Activated CD8-positive, alpha-beta T cell treated with anti-CD3 and anti-CD28 coated beads for 36 hours (primary cell): ENCODE measurements at regions of chr19 and their contacts with region 1.

Region 1: GRCh38 chr19:19170053-19170872 is at the start of gene MEF2B:
- DNase-seq: peak; percentile 87
- ATAC-seq: peak; percentile 93
- H3K4me3 Mint-ChIP-seq: no peak within 1 kb of the TSS
- H3K27ac Mint-ChIP-seq: no peak within 1 kb of the TSS
- H3K4me1 Mint-ChIP-seq: peaks cover 12% of the 10 kb centered on the region
- H3K27me3 Mint-ChIP-seq: peaks cover 4% of the 10 kb centered on the region
- CTCF ChIP-seq: no peak
- total RNA-seq, gene MEF2B: 1.4 to 2.6 TPM

Region 2: DNA sequence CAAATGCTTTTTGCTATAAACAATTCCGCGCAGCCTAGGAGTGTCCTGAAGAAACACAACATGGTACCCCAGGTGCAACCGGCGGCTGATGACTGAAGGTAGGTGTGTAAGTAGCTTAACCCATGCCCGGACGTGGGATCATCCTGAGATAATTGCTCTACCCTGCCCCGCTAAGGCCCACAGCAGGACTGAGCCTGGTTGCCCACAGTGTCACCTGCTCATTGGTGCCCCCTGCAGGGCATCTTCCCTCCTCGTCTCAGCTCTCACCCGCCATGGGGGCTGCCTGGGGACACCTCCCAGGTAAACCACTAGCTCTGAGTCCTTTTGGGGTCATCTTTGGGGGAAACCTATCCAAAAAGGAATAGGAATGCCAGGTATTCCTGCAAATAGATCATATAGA is 54.3 kb before region 1 on chr19:
- CTCF ChIA-PET with region 1: no interaction called
- POLR2A ChIA-PET with region 1: no interaction called
- intact Hi-C with region 1: no loop called
- DNase-seq: peak; percentile 69
- ATAC-seq: peak; percentile 64
- H3K4me3 Mint-ChIP-seq: no peak overlapping the region
- H3K27ac Mint-ChIP-seq: no peak overlapping the region
- H3K4me1 Mint-ChIP-seq: peaks cover 2% of the 10 kb centered on the region
- H3K27me3 Mint-ChIP-seq: no peaks in the 10 kb centered on the region
- CTCF ChIP-seq: peak; percentile 67

Region 3: GRCh38 chr19:19139876-19140229 is 30.4 kb before region 1 on chr19:
- CTCF ChIA-PET with region 1: interaction called, 14 read pairs
- POLR2A ChIA-PET with region 1: interaction called, 3 read pairs
- intact Hi-C with region 1: no loop called
- DNase-seq: no peak
- ATAC-seq: no peak
- H3K4me3 Mint-ChIP-seq: no peak overlapping the region
- H3K27ac Mint-ChIP-seq: no peak overlapping the region
- H3K4me1 Mint-ChIP-seq: peaks cover 28% of the 10 kb centered on the region
- H3K27me3 Mint-ChIP-seq: no peaks in the 10 kb centered on the region
- CTCF ChIP-seq: no peak

Region 4: DNA sequence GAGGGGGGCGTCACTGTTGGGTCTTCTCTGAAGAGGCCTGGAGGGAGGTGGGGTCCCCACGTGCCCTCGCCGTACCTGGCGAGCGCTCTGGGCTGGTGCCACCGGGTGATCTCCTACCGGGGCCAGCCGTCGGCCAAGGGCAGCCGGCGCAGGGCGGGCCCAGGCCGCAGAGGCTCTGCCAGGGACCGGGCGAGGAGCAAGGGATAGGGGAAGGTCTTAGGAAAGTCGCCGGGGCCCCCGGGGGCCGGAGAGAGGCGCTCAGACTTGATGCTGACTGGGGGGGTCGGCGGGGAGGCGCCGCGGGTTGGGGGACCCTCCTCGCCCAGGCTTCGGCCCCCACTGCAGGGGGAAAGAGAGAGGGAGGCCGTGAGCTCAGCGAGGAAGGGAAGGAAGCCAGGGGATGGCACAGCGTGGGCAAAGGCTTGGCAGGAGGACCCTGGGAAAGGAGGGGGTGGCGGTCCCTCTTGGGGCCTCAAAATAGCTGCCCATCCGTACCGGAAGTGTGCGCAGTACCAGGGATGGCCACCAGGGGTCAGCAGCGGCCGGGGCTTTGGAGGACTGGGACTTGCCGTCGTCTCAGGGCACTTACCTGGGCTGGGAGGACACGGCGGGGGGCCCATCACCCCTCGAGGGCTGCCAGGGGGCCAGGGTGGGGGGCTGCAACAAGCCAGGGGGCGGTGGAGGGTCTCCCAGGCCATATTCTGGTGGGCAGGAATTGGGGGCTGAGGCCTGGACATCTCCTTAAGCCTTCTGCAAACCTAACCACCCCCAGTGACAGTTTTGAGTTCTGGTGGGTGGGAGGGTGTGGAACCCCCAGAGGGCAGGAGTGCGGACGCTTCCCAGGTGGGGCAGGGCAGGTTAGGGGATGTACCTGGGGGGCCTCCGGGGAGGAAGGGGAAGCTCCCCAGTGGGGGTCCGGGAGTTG is 24.3 kb before region 1 on chr19:
- CTCF ChIA-PET with region 1: interaction called, 49 read pairs
- POLR2A ChIA-PET with region 1: interaction called, 3 read pairs
- intact Hi-C with region 1: no loop called
- DNase-seq: peak; percentile 92
- ATAC-seq: peak; percentile 98
- H3K4me3 Mint-ChIP-seq: no peak overlapping the region
- H3K27ac Mint-ChIP-seq: no peak overlapping the region
- H3K4me1 Mint-ChIP-seq: no peaks in the 10 kb centered on the region
- H3K27me3 Mint-ChIP-seq: no peaks in the 10 kb centered on the region
- CTCF ChIP-seq: peak; percentile 80

Region 5: DNA sequence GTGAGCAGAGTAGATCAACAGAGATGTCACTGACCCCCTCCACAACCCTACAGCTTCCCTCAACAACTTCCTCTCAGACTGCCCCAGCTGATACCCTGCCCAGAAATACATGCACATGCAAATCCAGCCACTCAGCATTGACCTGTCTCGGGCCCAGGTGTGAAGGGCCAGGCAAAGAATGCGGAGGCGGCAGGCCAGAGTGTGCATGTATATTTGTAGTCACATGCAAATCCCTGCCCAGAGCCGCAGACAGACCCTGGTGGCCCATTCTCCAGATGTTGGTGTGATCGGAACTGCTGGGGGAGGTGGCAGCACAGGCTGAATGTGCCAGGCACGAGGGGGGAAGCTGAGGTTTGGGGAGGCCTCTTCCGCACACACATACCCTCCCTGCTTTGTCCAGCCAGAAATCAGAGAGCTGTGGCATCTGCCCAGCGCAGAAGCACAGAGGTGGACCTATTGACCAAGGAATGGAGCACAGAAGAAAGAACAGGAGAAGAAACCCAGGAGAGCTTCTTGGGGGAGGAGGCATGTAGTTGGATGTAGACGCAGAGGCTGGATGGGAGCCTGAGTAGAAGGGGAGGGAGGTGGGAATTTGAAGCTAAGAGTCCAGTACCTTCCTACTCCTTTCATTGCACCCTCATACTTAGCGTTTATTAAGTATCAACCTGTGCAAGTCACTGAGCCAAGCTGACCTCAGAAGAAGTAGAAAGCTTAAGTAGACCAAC is 14.6 kb before region 1 on chr19:
- CTCF ChIA-PET with region 1: interaction called, 19 read pairs
- POLR2A ChIA-PET with region 1: interaction called, 6 read pairs
- intact Hi-C with region 1: no loop called
- DNase-seq: no peak
- ATAC-seq: no peak
- H3K4me3 Mint-ChIP-seq: no peak overlapping the region
- H3K27ac Mint-ChIP-seq: no peak overlapping the region
- H3K4me1 Mint-ChIP-seq: peaks cover 4% of the 10 kb centered on the region
- H3K27me3 Mint-ChIP-seq: no peaks in the 10 kb centered on the region
- CTCF ChIP-seq: no peak

Region 6: DNA sequence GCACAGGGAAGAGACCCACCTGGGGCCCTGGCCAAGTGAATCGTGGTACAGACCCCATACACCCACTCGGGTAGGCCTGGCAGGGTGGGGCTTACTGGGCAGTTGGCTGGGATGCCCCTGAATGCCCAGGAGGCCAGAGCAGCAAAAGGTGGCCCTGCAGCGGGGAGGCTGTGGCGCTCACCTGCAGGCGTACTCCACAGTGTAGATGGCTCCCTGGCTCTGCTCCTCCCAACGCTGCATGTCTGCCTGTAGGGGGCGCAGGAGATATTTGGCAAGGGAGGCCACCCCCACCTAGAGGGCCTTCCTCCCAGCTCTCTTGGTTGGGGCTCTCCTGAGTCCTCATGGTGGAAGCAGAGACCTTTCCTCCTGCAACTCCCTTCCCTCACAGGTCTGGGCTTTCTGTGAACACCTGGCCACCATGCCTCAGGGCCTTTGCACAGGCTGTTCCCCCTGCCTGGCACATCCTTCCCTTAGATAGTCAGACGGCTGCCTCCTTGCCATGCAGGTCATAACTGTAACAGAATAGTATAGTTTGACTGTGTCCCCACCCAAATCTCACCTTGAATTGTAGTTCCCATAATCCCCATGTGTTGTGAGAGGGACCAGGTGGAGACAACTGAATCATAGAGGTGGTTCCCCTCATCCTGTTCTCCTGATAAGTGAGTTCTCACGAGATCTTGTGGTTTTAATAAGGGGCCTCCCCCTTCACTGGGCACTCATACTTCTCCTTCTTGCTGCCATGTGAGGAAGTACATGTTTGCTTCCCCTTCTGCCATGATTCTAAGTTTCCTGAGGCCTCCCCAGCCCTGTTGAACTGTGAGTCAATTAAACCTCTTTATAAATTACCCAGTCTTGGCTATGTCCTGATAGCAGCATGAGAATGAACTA is 15.8 kb after region 1 on chr19:
- CTCF ChIA-PET with region 1: interaction called, 23 read pairs
- POLR2A ChIA-PET with region 1: no interaction called
- intact Hi-C with region 1: no loop called
- DNase-seq: peak; percentile 64
- ATAC-seq: peak; percentile 92
- H3K4me3 Mint-ChIP-seq: no peak overlapping the region
- H3K27ac Mint-ChIP-seq: no peak overlapping the region
- H3K4me1 Mint-ChIP-seq: peaks cover 25% of the 10 kb centered on the region
- H3K27me3 Mint-ChIP-seq: no peaks in the 10 kb centered on the region
- CTCF ChIP-seq: peak; percentile 63

Region 7: DNA sequence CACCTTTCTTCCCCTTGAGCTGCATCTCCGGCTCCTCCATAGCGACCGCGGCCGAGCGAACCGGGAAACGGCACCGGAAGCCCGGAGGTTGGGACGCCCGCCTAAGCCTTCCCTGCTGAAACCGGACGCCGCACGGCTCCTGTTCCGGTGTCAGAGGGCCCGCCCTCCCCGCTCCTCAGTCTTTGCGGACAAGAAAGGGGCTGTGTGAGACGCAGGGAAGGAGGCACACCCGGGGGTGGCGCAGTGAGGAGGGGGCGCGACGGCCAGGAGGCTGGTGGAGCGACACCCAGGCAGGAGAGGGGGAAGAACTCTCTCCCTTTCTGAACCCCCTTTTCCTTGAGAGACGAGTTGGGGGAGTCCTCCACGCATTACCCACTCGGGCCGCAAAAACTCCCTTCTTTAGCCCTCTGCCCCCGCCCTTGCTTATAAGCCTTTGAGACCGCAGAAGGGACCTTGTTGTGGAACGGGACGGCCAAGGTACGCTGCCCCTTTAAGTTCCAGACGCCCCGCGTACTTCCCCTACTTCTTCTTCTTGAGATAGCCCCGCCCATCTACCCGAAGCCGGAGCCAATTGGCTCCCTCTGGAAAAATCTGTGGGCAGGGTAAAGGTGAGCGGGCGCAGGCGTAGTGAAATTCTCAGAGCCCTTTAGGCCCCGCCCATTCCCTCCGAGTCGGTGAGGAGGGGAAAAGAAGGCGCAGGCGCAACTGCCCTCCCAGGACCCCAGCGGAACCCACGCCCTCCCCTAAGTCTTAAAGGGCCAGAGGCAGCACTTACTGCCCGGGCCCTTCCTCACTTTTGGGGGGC is 22.0 kb after region 1 on chr19 and contains the starts of genes BORCS8 and RFXANK:
- CTCF ChIA-PET with region 1: interaction called, 23 read pairs
- POLR2A ChIA-PET with region 1: interaction called, 4 read pairs
- intact Hi-C with region 1: no loop called
- DNase-seq: peak; percentile 100
- ATAC-seq: peak; percentile 93
- H3K4me3 Mint-ChIP-seq: peak within 1 kb of the TSS; percentile 93
- H3K27ac Mint-ChIP-seq: peak within 1 kb of the TSS; percentile 97
- H3K4me1 Mint-ChIP-seq: peaks cover 31% of the 10 kb centered on the region
- H3K27me3 Mint-ChIP-seq: no peaks in the 10 kb centered on the region
- CTCF ChIP-seq: no peak
- total RNA-seq, gene BORCS8: 20.8 to 22.2 TPM
- total RNA-seq, gene RFXANK: 61.4 to 68.5 TPM

Region 8: DNA sequence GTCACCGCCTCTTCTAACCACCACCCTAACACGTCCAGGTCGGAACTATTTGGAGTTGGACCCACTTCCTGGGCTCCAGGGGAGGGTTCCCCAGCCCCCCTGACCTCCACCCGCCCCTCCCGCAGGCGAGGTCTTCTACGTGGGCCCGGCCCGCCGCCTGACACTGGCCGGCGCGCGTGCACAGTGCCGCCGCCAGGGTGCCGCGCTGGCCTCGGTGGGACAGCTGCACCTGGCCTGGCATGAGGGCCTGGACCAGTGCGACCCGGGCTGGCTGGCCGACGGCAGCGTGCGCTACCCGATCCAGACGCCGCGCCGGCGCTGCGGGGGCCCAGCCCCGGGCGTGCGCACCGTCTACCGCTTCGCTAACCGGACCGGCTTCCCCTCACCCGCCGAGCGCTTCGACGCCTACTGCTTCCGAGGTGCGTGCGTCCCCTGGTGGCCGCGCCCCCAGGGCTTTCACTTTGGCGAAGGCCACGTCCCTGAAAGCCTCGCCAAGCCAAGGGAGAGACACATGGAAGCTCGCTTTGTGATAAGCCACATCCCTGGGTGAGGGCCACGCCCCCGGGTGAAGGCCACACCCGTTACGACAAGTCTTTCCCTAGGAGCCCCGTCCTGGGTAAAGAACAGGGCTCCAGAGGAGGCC is 54.7 kb after region 1 on chr19:
- CTCF ChIA-PET with region 1: interaction called, 12 read pairs
- POLR2A ChIA-PET with region 1: no interaction called
- intact Hi-C with region 1: no loop called
- DNase-seq: peak; percentile 85
- ATAC-seq: peak; percentile 91
- H3K4me3 Mint-ChIP-seq: peak overlapping the region; percentile 56
- H3K27ac Mint-ChIP-seq: no peak overlapping the region
- H3K4me1 Mint-ChIP-seq: peaks cover 2% of the 10 kb centered on the region
- H3K27me3 Mint-ChIP-seq: peaks cover 10% of the 10 kb centered on the region
- CTCF ChIP-seq: peak; percentile 72